Panc1 (cell line): ENCODE measurements at regions of chr11 and their contacts with region 1.

Region 1: GRCh38 chr11:100308202-100308601 is 378.9 kb upstream of the ARHGAP42 start:
- DNase-seq: no peak
- ATAC-seq: no peak
- H3K4me3 ChIP-seq: no peak overlapping the region
- H3K27ac ChIP-seq: no peak overlapping the region
- H3K4me1 ChIP-seq: no peaks in the 10 kb centered on the region
- H3K27me3 ChIP-seq: no peaks in the 10 kb centered on the region
- CTCF ChIP-seq: no peak

Region 2: DNA sequence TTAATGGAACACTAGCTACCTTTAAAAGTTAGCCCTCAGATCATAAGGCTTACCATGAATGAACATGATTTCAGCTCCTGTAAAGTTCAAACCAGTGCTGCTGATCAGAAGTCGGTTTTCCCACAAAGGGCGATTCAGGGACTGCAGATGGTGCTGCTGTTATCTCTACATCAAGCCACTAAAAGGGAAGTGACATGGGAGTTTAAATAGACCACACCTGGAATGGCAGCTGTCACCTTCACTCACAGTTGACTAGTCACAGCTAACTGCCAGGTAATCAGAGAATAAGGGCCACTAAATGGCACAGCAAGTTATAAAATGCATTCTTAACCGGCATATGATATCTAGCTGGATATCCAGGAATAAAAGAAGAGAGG is 202.2 kb before region 1 on chr11:
- CTCF ChIA-PET with region 1: no interaction called
- POLR2A ChIA-PET with region 1: interaction called, 12 read pairs
- in situ Hi-C with region 1: no loop called
- intact Hi-C with region 1: no loop called
- DNase-seq: no peak
- ATAC-seq: no peak
- H3K4me3 ChIP-seq: no peak overlapping the region
- H3K27ac ChIP-seq: no peak overlapping the region
- H3K4me1 ChIP-seq: no peaks in the 10 kb centered on the region
- H3K27me3 ChIP-seq: no peaks in the 10 kb centered on the region
- CTCF ChIP-seq: no peak

Region 3: GRCh38 chr11:100240025-100240539 is 68.1 kb before region 1 on chr11:
- CTCF ChIA-PET with region 1: no interaction called
- POLR2A ChIA-PET with region 1: no interaction called
- in situ Hi-C with region 1: no loop called
- intact Hi-C with region 1: no loop called
- DNase-seq: no peak
- ATAC-seq: no peak
- H3K4me3 ChIP-seq: no peak overlapping the region
- H3K27ac ChIP-seq: no peak overlapping the region
- H3K4me1 ChIP-seq: no peaks in the 10 kb centered on the region
- H3K27me3 ChIP-seq: no peaks in the 10 kb centered on the region
- CTCF ChIP-seq: no peak